ENCODE measurements at regions of chr7 and their contacts with region 1.

Region 1: DNA sequence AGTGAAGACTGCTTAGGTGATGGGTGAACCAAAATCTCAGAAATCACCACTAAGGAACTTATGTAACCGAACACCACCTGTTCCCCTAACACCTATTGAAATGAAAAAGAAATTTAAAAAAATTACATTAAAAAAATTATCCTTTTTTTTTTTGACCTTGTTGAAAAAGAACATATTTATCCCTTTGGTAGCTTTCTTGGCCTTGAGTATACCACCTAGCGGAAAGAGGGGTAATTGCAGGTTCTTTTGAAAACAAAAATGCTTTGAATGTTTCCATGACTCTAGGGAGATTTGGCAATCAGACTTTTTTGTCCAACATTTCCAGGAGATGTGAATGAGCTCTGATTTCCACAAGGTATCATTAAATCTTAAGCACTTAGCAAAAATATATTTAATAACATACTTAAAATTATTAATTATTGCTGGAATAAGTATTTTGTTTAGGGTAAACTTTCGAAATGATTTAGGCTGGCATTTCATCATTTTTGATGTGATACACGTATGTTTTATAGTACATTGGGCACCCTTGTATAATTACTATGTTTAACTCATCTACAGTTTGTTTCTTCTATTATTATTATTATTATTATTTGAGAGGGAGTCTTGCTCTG is 47.0 kb upstream of the ELMO1 start:
- DNase-seq: peak; percentile 13 to 33
- ATAC-seq: 0 out of 6 replicates have a peak, but pooled peaks of 1 of the 2 experiments have one; percentile 33
- H3K4me3 ChIP-seq: no peak overlapping the region
- H3K27ac ChIP-seq: no peak overlapping the region
- H3K4me1 ChIP-seq: no peaks in the 10 kb centered on the region
- CTCF ChIP-seq: peak; percentile 58
- EP300 ChIP-seq: no peak
- POLR2A ChIP-seq: no peak
- RAD21 ChIP-seq: peak; percentile 44 to 47

Region 2: GRCh38 chr7:37391791-37392672 is 103.6 kb before region 1 on chr7:
- CTCF ChIA-PET with region 1: no interaction called
- POLR2A ChIA-PET with region 1: no interaction called
- DNase-seq: no peak
- ATAC-seq: no peak
- H3K4me3 ChIP-seq: no peak overlapping the region
- H3K27ac ChIP-seq: no peak overlapping the region
- H3K4me1 ChIP-seq: peaks cover 5% of the 10 kb centered on the region; the same call in 1 of the 3 replicates
- CTCF ChIP-seq: no peak
- EP300 ChIP-seq: no peak
- POLR2A ChIP-seq: no peak
- RAD21 ChIP-seq: no peak

Region 3: DNA sequence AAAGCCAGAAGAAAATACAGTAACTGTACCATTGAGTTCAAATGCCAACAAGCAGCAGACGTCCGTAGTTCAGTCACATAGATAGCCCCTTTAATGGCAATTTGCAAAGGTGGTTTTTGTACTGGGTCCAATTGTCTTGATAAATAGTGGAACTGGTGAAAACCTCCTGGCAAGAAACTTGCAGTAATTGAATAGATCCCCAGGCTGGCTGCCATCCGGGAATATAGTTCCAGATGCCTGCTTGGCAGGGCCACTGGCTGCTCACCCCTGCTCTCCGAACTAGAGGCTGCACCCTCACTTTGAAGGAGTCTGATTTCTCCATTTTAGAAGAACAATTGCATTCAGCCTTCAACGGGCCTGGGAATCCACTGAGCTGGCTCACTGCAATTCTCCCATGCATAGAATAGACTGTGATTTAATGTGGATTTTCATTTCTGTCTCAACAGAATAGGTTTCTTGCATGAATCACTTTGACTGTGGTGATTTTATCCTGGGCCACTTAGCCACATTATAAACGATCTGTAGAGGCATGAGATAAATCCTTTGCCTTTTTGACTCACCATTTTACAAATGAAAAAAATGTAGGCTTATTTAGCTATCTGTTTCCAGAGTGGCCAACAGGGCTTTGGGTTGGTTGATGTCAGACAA is 11.1 kb before region 1 on chr7:
- CTCF ChIA-PET with region 1: interaction called, 20 read pairs
- POLR2A ChIA-PET with region 1: no interaction called
- DNase-seq: no peak
- ATAC-seq: no peak
- H3K4me3 ChIP-seq: no peak overlapping the region
- H3K27ac ChIP-seq: no peak overlapping the region
- H3K4me1 ChIP-seq: no peaks in the 10 kb centered on the region
- CTCF ChIP-seq: no peak
- EP300 ChIP-seq: no peak
- POLR2A ChIP-seq: no peak
- RAD21 ChIP-seq: no peak

Region 4: DNA sequence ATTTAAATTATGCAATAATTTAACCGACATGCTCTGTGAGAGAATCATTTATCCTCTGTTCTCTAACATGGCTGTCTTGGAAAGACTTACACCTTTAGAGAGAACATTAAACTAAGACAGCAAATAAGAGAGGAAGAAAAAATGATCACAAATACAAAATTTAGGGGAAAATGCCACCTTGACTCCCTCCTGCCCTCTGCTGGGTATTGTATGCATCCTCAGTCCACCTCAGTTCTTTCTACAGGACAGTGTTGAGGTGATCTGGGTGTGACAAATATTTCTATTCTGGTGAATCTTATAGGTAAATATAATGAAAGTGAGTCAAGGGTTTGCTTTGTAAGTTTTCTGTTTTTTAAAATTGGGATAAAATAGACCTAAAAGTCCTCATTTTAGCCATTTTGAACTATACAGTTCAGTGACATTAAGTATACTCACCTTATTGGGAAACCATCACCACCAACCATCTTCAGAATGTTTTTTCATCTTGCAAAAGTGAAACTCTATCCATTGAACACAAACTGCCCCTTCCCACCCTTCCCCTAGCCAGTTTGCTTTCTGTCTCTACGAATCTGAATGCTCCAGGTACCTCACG is 14.5 kb after region 1 on chr7:
- CTCF ChIA-PET with region 1: interaction called, 22 read pairs
- POLR2A ChIA-PET with region 1: no interaction called
- DNase-seq: peak in 1 of 2 experiments; percentile 18
- ATAC-seq: peak; percentile 56 to 73; a peak in 3 of 6 replicates
- H3K4me3 ChIP-seq: no peak overlapping the region
- H3K27ac ChIP-seq: no peak overlapping the region
- H3K4me1 ChIP-seq: no peaks in the 10 kb centered on the region
- CTCF ChIP-seq: peak; percentile 64
- EP300 ChIP-seq: no peak
- POLR2A ChIP-seq: no peak
- RAD21 ChIP-seq: peak; percentile 48 to 54; a peak in 4 of 5 replicates

Region 5: DNA sequence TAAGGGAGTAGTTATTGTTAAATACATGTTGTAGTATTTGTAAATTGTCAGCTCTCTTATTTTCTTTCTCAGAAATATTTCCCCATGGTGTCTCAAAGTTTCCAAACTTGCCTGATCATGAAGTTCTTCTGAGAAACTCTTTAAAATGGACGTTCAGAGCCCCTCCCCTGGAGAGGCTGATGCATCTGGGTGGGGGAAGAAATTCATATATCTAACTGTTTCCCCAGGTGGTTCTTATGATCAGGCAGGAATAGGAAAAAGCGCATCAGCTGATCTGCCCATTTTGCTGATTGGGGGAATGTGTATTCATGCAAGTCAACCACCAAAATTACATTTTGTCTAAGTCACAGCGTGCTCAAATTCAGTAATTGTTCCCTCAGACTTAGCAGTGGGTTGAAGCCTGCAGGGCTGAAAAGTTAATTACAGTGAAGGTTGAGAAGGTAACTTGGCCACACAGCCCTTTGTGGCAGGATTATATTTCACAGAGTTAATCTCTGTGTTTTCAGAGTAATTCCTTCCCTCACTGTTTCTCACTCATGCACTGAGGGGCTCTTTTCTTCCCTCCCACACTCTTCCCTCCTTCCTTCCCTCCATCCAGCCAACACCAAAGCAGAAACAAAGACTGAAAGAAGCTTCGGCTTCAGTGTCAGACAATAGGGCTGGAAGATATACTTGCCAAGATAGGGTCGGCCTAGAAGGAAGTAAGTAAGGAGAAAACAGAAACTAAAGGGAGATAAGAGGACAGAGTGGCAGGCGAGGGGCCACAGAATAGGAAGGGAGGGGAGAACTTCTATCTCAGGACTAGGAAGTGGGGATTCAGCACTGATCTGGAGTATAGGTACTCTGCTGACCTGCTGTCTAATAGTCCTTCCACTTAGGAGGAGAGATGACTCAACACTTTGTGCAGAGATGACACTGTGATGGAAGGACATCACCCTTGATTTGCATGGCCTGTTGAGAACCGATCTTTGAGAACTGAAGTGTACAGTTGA is 631.8 kb after region 1 on chr7:
- CTCF ChIA-PET with region 1: no interaction called
- POLR2A ChIA-PET with region 1: no interaction called
- DNase-seq: no peak
- ATAC-seq: no peak
- H3K4me3 ChIP-seq: no peak overlapping the region
- H3K27ac ChIP-seq: no peak overlapping the region
- H3K4me1 ChIP-seq: no peaks in the 10 kb centered on the region
- CTCF ChIP-seq: no peak
- EP300 ChIP-seq: no peak
- POLR2A ChIP-seq: no peak
- RAD21 ChIP-seq: no peak

Measured in A549 (cell line).